ENCODE measurements at regions of chr15 and their contacts with region 1.

Region 1: GRCh38 chr15:74768771-74769342 is 13.0 kb upstream of the CSK start:
- DNase-seq: peak; percentile 81
- ATAC-seq: peak; percentile 58
- H3K4me3 Mint-ChIP-seq: peak overlapping the region; percentile 58
- H3K27ac Mint-ChIP-seq: no peak overlapping the region
- H3K4me1 Mint-ChIP-seq: peaks cover 23% of the 10 kb centered on the region
- H3K27me3 Mint-ChIP-seq: peaks cover 21% of the 10 kb centered on the region
- CTCF ChIP-seq: peak; percentile 90

Region 2: DNA sequence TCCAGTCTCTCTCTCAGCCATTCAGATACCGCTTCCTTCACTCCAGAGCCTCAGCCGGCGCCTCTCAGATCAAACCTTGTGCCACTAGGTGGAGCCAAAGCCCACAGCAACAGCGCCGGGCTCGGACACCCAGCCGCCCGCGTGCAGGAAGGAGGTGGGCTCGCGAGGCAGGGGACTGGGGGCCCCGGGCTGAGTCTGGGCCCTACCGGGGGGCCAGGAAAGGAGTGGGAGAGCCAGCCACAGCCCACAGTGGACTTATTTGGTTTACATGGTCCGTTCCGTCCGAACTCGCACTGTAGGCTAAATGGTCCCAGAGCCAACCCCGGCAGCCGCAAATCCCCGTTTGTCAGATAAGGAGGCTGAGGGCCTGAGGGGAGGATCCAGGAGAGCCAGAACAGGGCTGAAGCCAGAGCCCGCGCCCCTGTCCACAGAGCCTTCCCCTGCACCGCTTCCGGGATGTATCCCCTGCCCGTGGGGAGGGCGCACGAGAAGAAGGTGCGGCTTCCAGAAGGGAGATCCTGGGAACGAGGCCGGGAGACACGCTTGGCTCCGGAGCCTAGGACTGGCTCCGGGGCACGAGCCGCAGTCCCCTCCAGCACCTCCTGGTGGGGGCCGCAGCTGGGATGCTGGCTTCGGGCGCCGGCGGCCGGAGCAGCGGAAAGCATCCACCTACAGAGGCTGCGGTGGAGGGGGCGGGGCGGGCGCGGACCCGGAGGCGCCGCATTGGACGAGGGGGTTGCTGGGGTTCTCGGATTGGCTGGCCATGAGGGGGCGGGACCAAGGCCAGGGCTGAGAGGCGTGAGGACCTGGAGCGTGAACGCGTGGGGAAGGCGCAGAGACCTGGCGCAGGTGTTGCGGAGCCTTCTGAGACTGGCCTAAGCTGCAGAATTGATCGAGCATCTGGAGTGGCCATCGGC is 394.9 kb before region 1 on chr15:
- CTCF ChIA-PET with region 1: interaction called, 10 read pairs
- POLR2A ChIA-PET with region 1: no interaction called
- DNase-seq: peak; percentile 97
- ATAC-seq: peak; percentile 92
- H3K4me3 Mint-ChIP-seq: peak overlapping the region; percentile 70
- H3K27ac Mint-ChIP-seq: peak overlapping the region; percentile 63; the same call in 1 of the 2 replicates
- H3K4me1 Mint-ChIP-seq: peaks cover 19% of the 10 kb centered on the region
- H3K27me3 Mint-ChIP-seq: no peaks in the 10 kb centered on the region; the same call in 1 of the 2 replicates
- CTCF ChIP-seq: peak; percentile 85

Region 3: DNA sequence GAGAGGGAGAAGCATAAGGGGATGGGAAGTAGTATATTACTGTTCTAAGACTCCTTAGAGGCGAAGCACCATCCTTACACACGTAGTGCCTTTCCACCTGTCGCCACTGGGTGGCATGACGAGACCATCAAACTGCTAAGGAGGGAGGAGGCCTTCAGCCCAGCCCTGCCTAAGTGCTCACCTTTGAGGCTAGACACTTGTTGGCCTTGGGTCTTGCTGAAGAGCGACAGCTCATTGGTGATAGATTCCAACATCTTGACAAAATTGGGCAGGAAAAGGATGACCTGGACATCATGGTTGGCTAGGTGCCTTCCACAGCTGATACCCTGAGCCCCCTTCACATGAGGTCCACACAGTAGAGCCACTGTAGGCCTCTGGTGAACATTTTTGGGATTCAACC is 133.6 kb before region 1 on chr15:
- CTCF ChIA-PET with region 1: interaction called, 409 read pairs
- POLR2A ChIA-PET with region 1: interaction called, 3 read pairs
- DNase-seq: peak; percentile 80
- ATAC-seq: peak; percentile 83
- H3K4me3 Mint-ChIP-seq: no peak overlapping the region
- H3K27ac Mint-ChIP-seq: no peak overlapping the region
- H3K4me1 Mint-ChIP-seq: no peaks in the 10 kb centered on the region
- H3K27me3 Mint-ChIP-seq: no peaks in the 10 kb centered on the region
- CTCF ChIP-seq: peak; percentile 84

Region 4: GRCh38 chr15:74669627-74670026 is 99.2 kb before region 1 on chr15:
- CTCF ChIA-PET with region 1: interaction called, 24 read pairs
- POLR2A ChIA-PET with region 1: no interaction called
- DNase-seq: no peak
- ATAC-seq: no peak
- H3K4me3 Mint-ChIP-seq: no peak overlapping the region
- H3K27ac Mint-ChIP-seq: no peak overlapping the region
- H3K4me1 Mint-ChIP-seq: no peaks in the 10 kb centered on the region
- H3K27me3 Mint-ChIP-seq: no peaks in the 10 kb centered on the region
- CTCF ChIP-seq: no peak

Region 5: DNA sequence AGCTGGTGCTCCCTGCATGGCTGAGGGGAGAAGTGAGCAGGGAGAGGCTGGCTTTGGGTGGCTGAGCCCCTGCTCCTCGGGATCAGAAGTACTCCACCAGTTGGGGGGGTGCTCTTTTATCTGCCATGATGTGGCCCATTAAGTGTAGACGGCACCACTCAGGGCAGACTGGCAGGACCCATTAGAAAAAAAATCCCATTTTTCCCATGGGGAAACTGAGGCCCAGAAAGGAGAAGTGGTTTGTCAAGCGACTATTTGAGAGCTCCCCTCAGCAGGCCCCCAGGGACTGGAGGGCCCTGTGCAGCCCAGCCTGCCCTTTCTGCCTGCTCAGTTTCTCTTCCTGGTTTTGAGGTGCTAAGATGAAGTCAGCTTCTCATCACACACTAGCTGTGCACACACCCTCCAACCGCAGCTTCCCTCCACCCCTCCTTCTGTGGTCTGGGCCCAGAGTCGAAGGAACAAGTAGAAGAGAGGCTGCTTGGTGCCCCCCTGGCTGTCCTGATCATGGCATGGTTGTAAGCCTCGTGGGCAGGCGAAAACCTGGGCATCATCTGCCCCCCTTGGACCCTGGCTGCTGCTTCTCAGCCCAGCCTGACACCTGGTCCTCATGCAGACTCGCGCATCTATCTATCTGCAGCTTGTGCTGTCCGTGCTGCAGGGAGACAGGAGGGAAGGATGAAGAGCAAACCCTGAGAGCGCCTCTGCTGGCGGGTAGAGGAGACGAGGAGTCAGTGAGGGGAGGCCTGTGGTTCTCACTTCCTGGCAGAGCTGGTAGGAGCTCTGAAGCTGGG is 18.6 kb after region 1 on chr15:
- CTCF ChIA-PET with region 1: interaction called, 360 read pairs
- POLR2A ChIA-PET with region 1: interaction called, 5 read pairs
- DNase-seq: peak; percentile 80
- ATAC-seq: peak; percentile 82
- H3K4me3 Mint-ChIP-seq: no peak overlapping the region
- H3K27ac Mint-ChIP-seq: no peak overlapping the region
- H3K4me1 Mint-ChIP-seq: peaks cover 49% of the 10 kb centered on the region
- H3K27me3 Mint-ChIP-seq: no peaks in the 10 kb centered on the region; the same call in 1 of the 2 replicates
- CTCF ChIP-seq: peak; percentile 35

Region 6: GRCh38 chr15:74808073-74808755 is 39.4 kb after region 1 on chr15:
- CTCF ChIA-PET with region 1: interaction called, 30 read pairs
- POLR2A ChIA-PET with region 1: no interaction called
- DNase-seq: no peak
- ATAC-seq: no peak
- H3K4me3 Mint-ChIP-seq: no peak overlapping the region
- H3K27ac Mint-ChIP-seq: no peak overlapping the region
- H3K4me1 Mint-ChIP-seq: peaks cover 6% of the 10 kb centered on the region
- H3K27me3 Mint-ChIP-seq: no peaks in the 10 kb centered on the region
- CTCF ChIP-seq: no peak

Region 7: DNA sequence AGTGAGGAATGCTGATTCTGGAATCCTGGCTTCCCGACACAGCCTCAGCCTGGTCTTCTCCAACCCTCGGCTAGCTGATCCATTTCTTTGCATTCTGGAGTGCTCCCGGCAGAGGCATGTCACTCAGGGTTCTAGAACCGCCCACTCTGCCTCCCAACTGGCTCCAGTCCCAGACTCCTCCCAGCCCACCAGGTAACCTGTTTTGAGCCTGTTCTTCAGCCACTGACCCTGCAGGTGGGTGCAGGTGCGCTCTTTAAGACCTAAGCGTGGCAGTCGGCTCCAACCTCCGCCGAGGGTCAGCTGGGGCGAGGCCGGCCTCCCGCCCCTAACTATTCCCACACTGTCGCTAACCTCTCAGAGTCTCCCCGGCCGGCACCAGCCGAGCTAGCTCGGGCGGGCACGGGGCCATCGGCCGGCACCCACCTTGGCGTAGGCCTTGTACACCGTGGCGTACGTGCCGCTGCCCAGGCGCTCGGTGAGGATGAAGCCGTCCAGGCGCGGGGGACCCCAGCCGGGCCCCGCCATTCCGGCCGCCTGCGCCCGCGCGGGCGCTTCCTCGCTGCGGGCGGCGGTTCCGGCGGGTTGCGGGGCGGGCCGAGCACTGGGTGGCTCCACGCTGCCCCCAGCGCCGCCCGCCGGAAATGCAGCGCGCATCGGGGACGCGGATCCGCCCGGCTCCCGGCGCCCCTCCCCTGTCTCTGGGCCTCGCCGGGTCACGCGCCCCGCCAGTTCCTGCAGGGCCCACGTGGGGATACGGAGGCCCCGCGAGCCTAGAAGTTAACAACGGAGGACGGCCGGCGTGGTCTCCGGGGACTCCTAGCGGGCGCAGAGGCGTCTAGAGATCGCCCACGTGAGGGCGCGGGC is 74.0 kb after region 1 on chr15 and contains the start of gene ULK3:
- CTCF ChIA-PET with region 1: interaction called, 34 read pairs
- POLR2A ChIA-PET with region 1: no interaction called
- DNase-seq: peak; percentile 87
- ATAC-seq: peak; percentile 87
- H3K4me3 Mint-ChIP-seq: peak within 1 kb of the TSS; percentile 87
- H3K27ac Mint-ChIP-seq: peak within 1 kb of the TSS; percentile 91
- H3K4me1 Mint-ChIP-seq: peaks cover 21% of the 10 kb centered on the region
- H3K27me3 Mint-ChIP-seq: no peaks in the 10 kb centered on the region
- CTCF ChIP-seq: peak; percentile 76
- total RNA-seq, gene ULK3: 34.4 to 38.9 TPM (median 37.4 TPM) in 3 replicates

Region 8: GRCh38 chr15:74857082-74857655 is 88.3 kb after region 1 on chr15:
- CTCF ChIA-PET with region 1: no interaction called
- POLR2A ChIA-PET with region 1: no interaction called
- DNase-seq: no peak
- ATAC-seq: no peak
- H3K4me3 Mint-ChIP-seq: no peak overlapping the region
- H3K27ac Mint-ChIP-seq: no peak overlapping the region; the same call in 1 of the 2 replicates
- H3K4me1 Mint-ChIP-seq: no peaks in the 10 kb centered on the region
- H3K27me3 Mint-ChIP-seq: no peaks in the 10 kb centered on the region
- CTCF ChIP-seq: no peak

Region 9: DNA sequence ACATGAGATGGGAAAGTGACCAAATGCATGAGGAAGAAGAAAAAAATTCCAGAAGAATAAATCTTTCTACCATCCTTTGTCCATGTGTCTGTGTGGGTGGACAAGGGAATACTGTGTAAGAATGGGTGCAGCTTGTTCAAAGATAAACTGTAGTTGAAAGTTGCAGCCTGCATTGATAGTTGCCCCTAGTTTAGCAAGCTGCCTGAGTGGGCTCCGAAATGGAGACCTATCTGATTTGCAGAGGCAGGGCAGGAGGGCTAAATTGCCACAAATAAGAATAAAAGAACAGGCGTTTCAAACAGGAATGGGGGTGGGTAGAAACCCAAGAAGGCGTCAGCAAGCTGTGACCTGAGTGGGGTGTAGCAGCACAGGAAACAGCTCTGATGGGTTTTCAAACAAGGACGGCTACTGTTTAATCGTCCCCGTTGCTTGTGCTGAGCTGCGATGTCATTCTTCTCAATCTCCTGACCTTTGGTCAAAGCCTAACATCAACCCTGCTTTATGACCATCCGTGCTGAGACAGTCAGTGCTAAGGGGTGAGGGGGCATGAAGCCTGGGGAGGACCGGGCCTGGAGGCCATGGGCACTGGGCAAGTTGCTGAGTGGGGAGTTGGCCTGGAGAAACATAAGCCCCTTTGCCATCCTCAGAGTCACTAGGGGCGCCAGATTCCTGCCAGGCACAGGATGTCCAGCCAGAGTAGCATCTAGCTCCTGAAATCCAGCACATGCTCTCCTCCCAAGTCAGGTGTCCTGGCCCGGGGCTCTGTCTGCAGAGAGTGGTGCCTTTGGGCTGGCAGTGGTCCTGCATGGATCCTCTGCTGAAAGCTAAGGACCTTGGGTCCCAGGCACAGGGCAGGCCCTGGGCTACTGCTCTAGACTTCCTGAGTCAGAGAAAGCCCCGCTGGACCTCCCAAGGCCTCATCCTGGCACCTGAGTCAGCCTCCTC is 413.6 kb after region 1 on chr15:
- CTCF ChIA-PET with region 1: no interaction called
- POLR2A ChIA-PET with region 1: no interaction called
- DNase-seq: peak; percentile 36
- ATAC-seq: peak; percentile 36
- H3K4me3 Mint-ChIP-seq: no peak overlapping the region
- H3K27ac Mint-ChIP-seq: no peak overlapping the region
- H3K4me1 Mint-ChIP-seq: peaks cover 48% of the 10 kb centered on the region
- H3K27me3 Mint-ChIP-seq: peaks cover 19% of the 10 kb centered on the region
- CTCF ChIP-seq: no peak

Region 10: GRCh38 chr15:75215107-75216004 is 446.5 kb after region 1 on chr15:
- CTCF ChIA-PET with region 1: no interaction called
- POLR2A ChIA-PET with region 1: no interaction called
- DNase-seq: no peak
- ATAC-seq: peak; percentile 9
- H3K4me3 Mint-ChIP-seq: no peak overlapping the region
- H3K27ac Mint-ChIP-seq: no peak overlapping the region
- H3K4me1 Mint-ChIP-seq: peaks cover 25% of the 10 kb centered on the region
- H3K27me3 Mint-ChIP-seq: no peaks in the 10 kb centered on the region; the same call in 1 of the 2 replicates
- CTCF ChIP-seq: no peak

Measured in WTC11 (cell line).